Activated CD4-positive, alpha-beta T cell treated with anti-CD3 and anti-CD28 coated beads for 36 hours (primary cell): ENCODE measurements at regions of chr10 and their contacts with region 1.

Region 1: GRCh38 chr10:122565728-122566206 is 5.2 kb downstream of the DMBT1 start:
- DNase-seq: peak; percentile 85
- ATAC-seq: peak; percentile 47
- H3K4me3 Mint-ChIP-seq: no peak overlapping the region
- H3K27ac Mint-ChIP-seq: no peak overlapping the region
- H3K4me1 Mint-ChIP-seq: peaks cover 7% of the 10 kb centered on the region
- H3K27me3 Mint-ChIP-seq: peaks cover 12% of the 10 kb centered on the region

Region 2: DNA sequence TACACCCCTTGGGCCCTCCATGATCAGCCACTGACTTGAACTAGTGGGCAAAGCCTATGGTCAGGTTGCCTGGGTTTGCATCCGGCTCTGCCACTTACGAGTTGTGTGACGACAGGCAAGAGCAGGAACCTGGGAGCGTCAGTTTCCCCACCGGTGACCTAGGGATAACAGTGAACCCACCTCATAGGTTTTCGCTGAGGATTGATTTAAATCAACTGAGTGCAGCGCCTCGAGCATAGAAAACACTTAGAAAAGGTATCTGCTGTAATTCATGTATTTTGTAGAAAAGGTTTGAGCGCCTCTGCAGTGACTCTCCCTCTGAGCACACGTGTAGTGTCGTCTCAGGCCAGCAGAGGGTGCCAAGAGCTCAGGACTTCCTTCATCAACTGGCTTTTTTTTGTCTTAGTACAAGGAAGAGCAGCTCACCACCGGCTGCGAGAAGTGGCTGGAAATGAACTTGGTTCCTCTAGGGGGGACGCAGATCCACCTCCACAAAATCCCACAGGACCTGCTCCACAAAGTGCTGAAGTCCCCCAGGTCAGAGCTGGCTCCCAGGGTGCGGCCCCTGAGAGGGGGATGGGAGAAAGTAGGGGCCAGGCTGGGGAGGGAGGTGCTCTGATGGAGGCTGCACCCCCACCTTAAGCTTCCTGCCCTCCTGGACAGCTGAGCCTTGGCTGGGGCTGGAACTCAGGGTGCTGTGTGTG is 267.0 kb before region 1 on chr10:
- CTCF ChIA-PET with region 1: interaction called, 26 read pairs
- POLR2A ChIA-PET with region 1: no interaction called
- intact Hi-C with region 1: loop called (anchors 1 kb)
- DNase-seq: peak; percentile 80
- ATAC-seq: peak; percentile 94
- H3K4me3 Mint-ChIP-seq: no peak overlapping the region
- H3K27ac Mint-ChIP-seq: no peak overlapping the region
- H3K4me1 Mint-ChIP-seq: peaks cover 5% of the 10 kb centered on the region
- H3K27me3 Mint-ChIP-seq: peaks cover 3% of the 10 kb centered on the region

Region 3: GRCh38 chr10:122435212-122435827 is 130.4 kb before region 1 on chr10:
- CTCF ChIA-PET with region 1: interaction called, 15 read pairs
- POLR2A ChIA-PET with region 1: no interaction called
- intact Hi-C with region 1: loop called (anchors 1 to 2 kb)
- DNase-seq: no peak
- ATAC-seq: peak; percentile 39
- H3K4me3 Mint-ChIP-seq: no peak overlapping the region
- H3K27ac Mint-ChIP-seq: no peak overlapping the region
- H3K4me1 Mint-ChIP-seq: no peaks in the 10 kb centered on the region
- H3K27me3 Mint-ChIP-seq: no peaks in the 10 kb centered on the region

Region 4: GRCh38 chr10:122525788-122526187 is 40.0 kb before region 1 on chr10:
- CTCF ChIA-PET with region 1: interaction called, 4 read pairs
- POLR2A ChIA-PET with region 1: no interaction called
- intact Hi-C with region 1: loop called in 1 of 2 experiments (anchors 1 kb)
- DNase-seq: peak; percentile 26
- ATAC-seq: no peak
- H3K4me3 Mint-ChIP-seq: no peak overlapping the region
- H3K27ac Mint-ChIP-seq: no peak overlapping the region
- H3K4me1 Mint-ChIP-seq: no peaks in the 10 kb centered on the region
- H3K27me3 Mint-ChIP-seq: peaks cover 4% of the 10 kb centered on the region

Region 5: DNA sequence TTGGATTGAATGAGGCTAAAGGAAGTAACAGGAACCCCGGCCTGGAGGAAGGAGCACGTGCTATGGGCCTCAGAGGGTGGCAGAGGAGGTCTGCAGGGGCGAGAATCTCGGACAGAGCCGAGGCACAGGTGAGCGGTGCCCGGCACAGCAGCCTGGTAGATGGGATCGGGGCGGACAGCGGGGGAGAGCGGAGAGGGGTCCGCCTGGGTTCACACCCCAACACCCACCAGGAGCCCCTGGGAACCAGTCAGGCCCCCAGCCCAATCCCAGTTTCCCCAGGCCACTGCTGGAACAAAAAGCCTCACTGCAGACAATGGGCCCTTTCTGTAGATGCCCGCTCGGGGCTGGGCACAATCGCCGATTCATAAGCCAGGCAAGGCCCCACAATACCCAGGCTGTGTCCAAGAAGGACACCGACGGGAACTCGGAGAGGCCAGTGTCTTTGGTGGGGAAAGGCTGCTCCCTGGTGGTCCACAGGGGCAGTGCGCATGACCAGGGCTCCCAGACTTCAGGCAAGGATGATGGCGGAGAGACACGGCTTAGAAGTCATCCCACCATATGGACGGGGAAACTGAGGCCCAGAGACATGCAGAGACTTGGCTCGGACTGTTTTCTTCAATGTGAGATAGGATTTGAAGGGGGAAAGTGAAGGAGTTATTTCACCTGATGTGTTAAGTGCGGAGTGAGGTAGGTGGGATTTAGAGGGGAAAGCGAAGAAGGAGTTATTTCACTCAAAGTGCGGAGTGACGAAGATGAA is 993.5 kb after region 1 on chr10:
- CTCF ChIA-PET with region 1: no interaction called
- POLR2A ChIA-PET with region 1: no interaction called
- intact Hi-C with region 1: loop called in 1 of 2 experiments (anchors 5 kb)
- DNase-seq: peak; percentile 79
- ATAC-seq: peak; percentile 70
- H3K4me3 Mint-ChIP-seq: no peak overlapping the region
- H3K27ac Mint-ChIP-seq: no peak overlapping the region
- H3K4me1 Mint-ChIP-seq: no peaks in the 10 kb centered on the region
- H3K27me3 Mint-ChIP-seq: peaks cover 15% of the 10 kb centered on the region